ENCODE measurements at regions of chr14 and their contacts with region 1.

Region 1: GRCh38 chr14:70907176-70907995 is at the start of gene PCNX1:
- DNase-seq: peak; percentile 91
- H3K4me3 ChIP-seq: peak within 1 kb of the TSS; percentile 91
- H3K27ac ChIP-seq: peak within 1 kb of the TSS; percentile 97
- H3K4me1 ChIP-seq: peaks cover 72% of the 10 kb centered on the region
- H3K27me3 ChIP-seq: no peaks in the 10 kb centered on the region
- CTCF ChIP-seq: peak; percentile 93
- total RNA-seq, gene PCNX1: 35.2 TPM

Region 2: DNA sequence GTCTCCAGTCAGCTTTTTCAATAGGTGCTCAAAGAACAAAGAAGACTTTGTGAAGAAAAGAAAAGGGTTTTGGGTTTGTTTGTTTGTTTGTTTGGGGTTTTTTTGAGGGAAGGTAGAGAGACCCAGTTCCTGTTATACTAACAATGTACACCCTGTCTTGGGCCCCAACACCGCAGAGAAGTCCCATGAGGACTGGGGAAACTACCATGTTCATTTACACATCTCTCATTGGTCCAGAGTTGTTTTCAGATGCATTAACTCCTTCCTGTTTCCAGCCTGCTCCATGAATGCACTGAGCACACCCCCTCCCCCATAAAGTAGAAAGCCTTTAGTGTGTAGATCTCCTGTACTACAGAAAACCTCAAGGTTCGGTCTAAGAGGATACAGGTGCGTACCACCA is 667.6 kb before region 1 on chr14:
- intact Hi-C with region 1: no loop called
- DNase-seq: no peak
- H3K4me3 ChIP-seq: no peak overlapping the region
- H3K27ac ChIP-seq: no peak overlapping the region
- H3K4me1 ChIP-seq: no peaks in the 10 kb centered on the region
- H3K27me3 ChIP-seq: peaks cover 55% of the 10 kb centered on the region
- CTCF ChIP-seq: no peak

Region 3: GRCh38 chr14:70955543-70956480 is 48.4 kb after region 1 on chr14:
- intact Hi-C with region 1: loop called (anchors 10 kb)
- DNase-seq: no peak
- H3K4me3 ChIP-seq: no peak overlapping the region
- H3K27ac ChIP-seq: no peak overlapping the region
- H3K4me1 ChIP-seq: peaks cover 53% of the 10 kb centered on the region
- H3K27me3 ChIP-seq: no peaks in the 10 kb centered on the region
- CTCF ChIP-seq: peak; percentile 64

Measured in left ventricle myocardium inferior (tissue), 1 donor.